Left ventricle myocardium superior (tissue), 1 donor: ENCODE measurements at regions of chr14 and their contacts with region 1.

Region 1: DNA sequence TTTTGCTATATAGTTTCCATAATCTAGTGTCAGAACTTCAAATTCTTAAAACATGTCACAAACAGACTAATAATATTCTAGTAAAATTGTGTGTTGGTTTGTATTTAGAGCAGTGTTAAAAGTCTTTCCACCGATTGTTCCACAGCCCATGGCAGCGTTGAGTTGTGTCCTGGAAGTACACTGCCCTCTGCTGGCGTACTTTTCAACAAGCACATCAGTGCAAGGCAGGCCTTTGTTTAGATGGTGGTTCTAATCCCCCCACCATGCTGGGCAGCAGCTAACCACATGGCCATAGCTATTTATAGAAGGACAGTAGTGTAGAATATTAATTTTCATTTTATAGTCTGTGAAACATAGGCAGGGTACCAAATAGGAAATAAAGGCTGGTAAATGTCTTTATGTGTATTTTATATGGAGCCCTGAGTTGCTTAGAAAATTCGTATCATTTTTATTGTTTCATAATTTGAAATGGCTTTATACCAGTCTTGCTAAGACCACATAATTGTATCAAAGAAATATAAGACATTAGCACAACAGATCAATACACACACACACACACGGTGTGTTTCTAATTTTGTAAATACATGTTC is 235.4 kb downstream of the SEC23A start:
- DNase-seq: peak; percentile 53
- ATAC-seq: peak; percentile 81

Region 2: GRCh38 chr14:36975835-36976234 is 1891.8 kb before region 1 on chr14:
- intact Hi-C with region 1: no loop called
- DNase-seq: no peak
- ATAC-seq: no peak

Region 3: DNA sequence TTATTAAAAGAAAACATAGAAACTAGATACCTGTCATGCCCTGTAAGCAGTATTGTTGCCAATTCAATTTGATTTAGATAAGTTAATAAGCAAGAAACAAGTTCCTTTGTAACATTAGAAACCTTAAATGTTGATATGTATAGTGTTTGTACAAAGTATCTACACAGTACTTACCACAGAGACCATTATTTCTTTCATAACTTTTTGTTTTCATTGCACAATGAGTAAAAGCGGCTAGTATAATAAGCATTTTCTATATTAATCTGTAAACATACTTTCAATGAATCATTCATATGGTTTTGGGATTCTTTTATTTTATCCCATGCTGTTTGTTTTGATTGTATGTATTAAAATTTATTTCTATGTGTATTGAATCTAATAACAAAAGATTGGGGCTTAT is 967.1 kb before region 1 on chr14:
- intact Hi-C with region 1: no loop called
- DNase-seq: no peak
- ATAC-seq: no peak

Region 4: DNA sequence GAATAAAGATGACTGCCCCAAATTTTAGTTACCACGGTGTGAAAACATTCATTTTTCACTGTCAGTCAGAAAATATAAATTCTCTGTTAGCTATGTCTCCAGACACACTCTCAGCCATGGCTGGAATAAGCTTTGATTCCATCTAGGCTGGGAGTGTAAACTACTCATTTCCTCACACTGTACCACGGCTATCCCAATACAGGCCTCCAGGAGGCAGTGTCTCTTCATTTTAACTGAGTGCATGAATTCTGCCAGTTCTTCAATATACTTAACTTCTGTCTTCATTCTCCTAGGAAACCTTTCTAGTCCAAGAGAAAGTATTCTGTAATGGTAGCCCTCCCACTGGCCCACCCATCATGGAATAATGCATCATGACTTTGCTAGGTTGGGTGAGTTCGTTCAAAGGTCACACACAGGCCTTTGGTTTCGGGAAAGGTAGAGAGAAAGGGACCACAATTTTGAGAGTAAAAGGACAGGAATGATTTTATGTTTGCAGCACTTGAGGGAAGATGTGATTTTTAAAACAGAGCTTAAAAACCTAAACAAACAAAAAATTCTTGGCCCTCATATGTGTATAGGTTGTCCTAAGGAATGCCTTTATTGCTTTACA is 145.7 kb before region 1 on chr14:
- intact Hi-C with region 1: loop called (anchors 10 kb)
- DNase-seq: peak; percentile 35
- ATAC-seq: peak; percentile 71

Region 5: GRCh38 chr14:38931969-38932652 is 64.5 kb after region 1 on chr14:
- intact Hi-C with region 1: no loop called
- DNase-seq: no peak
- ATAC-seq: no peak